ENCODE measurements at regions of chr2 and their contacts with region 1.

Region 1: GRCh38 chr2:101770726-101771125 is 73.2 kb downstream of the MAP4K4 start:
- DNase-seq: peak; percentile 21 to 76 (median 41)
- ATAC-seq: peak; percentile 93
- H3K4me3 ChIP-seq: no peak overlapping the region
- H3K27ac ChIP-seq: no peak overlapping the region
- H3K4me1 ChIP-seq: peaks cover 0 to 18% of the 10 kb centered on the region in 2 experiments; a peak in 2 of 5 replicates
- H3K27me3 ChIP-seq: no peaks in the 10 kb centered on the region
- CTCF ChIP-seq: peak; percentile 67 to 72 (median 68)
- EP300 ChIP-seq: no peak
- POLR2A ChIP-seq: no peak
- RAD21 ChIP-seq: peak; percentile 46 to 71

Region 2: DNA sequence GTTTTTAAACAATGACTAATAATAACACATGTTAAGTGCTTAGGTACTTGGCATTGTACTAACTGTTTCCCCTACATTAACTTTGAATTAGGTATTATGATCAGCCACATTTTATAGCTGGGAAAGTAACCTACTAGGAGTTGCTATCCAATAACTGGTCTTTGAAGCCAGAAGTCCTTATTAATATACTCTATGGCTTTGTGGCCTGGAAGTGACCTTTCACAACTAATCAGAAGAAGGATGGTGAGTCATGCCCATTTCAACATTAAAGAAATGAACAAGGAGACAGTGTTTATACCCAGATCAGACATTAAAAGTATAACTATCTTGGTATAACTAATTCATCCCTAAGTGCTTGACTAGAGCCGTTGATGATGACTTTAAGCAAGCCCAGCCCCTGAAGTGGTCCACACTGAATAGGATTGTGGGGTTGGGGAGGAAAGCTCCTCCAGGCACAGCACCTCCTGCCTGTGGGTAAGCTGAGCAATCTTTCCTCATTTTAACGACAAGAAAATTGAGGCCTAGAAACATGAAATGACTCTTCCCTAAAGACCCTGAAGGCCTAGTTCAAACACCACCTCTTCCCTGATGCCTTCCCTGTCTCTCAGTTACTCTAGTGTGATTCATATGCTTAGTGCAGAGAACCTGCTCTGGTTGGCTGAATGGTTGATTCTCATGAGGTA is 224.2 kb before region 1 on chr2:
- CTCF ChIA-PET with region 1: no interaction called
- POLR2A ChIA-PET with region 1: no interaction called
- in situ Hi-C with region 1: no loop called
- intact Hi-C with region 1: no loop called
- DNase-seq: no peak
- ATAC-seq: no peak
- H3K4me3 ChIP-seq: no peak overlapping the region
- H3K27ac ChIP-seq: no peak overlapping the region
- H3K4me1 ChIP-seq: no peaks in the 10 kb centered on the region
- H3K27me3 ChIP-seq: peaks cover 0 to 10% of the 10 kb centered on the region in 2 experiments; a peak in 3 of 5 replicates
- CTCF ChIP-seq: no peak
- EP300 ChIP-seq: no peak
- POLR2A ChIP-seq: no peak
- RAD21 ChIP-seq: no peak

Region 3: GRCh38 chr2:101725515-101726192 is 45.1 kb before region 1 on chr2:
- CTCF ChIA-PET with region 1: no interaction called
- POLR2A ChIA-PET with region 1: no interaction called
- in situ Hi-C with region 1: no loop called
- intact Hi-C with region 1: no loop called
- DNase-seq: peak; percentile 24 to 60 (median 27)
- ATAC-seq: peak; percentile 68
- H3K4me3 ChIP-seq: no peak overlapping the region
- H3K27ac ChIP-seq: no peak overlapping the region
- H3K4me1 ChIP-seq: peaks cover 0 to 4% of the 10 kb centered on the region in 2 experiments; a peak in 3 of 5 replicates
- H3K27me3 ChIP-seq: no peaks in the 10 kb centered on the region
- CTCF ChIP-seq: peak; percentile 43 to 65 (median 56)
- EP300 ChIP-seq: no peak
- POLR2A ChIP-seq: no peak
- RAD21 ChIP-seq: peak; percentile 40 to 62

Region 4: GRCh38 chr2:101823347-101823791 is 52.6 kb after region 1 on chr2:
- CTCF ChIA-PET with region 1: no interaction called
- POLR2A ChIA-PET with region 1: no interaction called
- in situ Hi-C with region 1: loop called (anchors 5 kb)
- intact Hi-C with region 1: no loop called
- DNase-seq: peak; percentile 47 to 82 (median 52)
- ATAC-seq: peak; percentile 92
- H3K4me3 ChIP-seq: no peak overlapping the region
- H3K27ac ChIP-seq: no peak overlapping the region
- H3K4me1 ChIP-seq: peaks cover 0 to 37% of the 10 kb centered on the region in 2 experiments; a peak in 3 of 5 replicates
- H3K27me3 ChIP-seq: no peaks in the 10 kb centered on the region
- CTCF ChIP-seq: peak; percentile 70 to 85 (median 83)
- EP300 ChIP-seq: no peak
- POLR2A ChIP-seq: no peak
- RAD21 ChIP-seq: peak; percentile 52 to 66

Region 5: GRCh38 chr2:101831351-101831865 is 60.7 kb after region 1 on chr2:
- CTCF ChIA-PET with region 1: interaction called, 3 read pairs
- POLR2A ChIA-PET with region 1: interaction called, 4 read pairs
- in situ Hi-C with region 1: no loop called
- intact Hi-C with region 1: loop called (anchors 2 kb)
- DNase-seq: peak; percentile 43 to 74 (median 54)
- ATAC-seq: peak; percentile 99
- H3K4me3 ChIP-seq: no peak overlapping the region
- H3K27ac ChIP-seq: no peak overlapping the region; the same call in 2 of the 3 replicates
- H3K4me1 ChIP-seq: peaks cover 0 to 31% of the 10 kb centered on the region in 2 experiments; a peak in 3 of 5 replicates
- H3K27me3 ChIP-seq: no peaks in the 10 kb centered on the region
- CTCF ChIP-seq: peak; percentile 76 to 81 (median 80)
- EP300 ChIP-seq: no peak
- POLR2A ChIP-seq: no peak
- RAD21 ChIP-seq: peak; percentile 66 to 72

Region 6: DNA sequence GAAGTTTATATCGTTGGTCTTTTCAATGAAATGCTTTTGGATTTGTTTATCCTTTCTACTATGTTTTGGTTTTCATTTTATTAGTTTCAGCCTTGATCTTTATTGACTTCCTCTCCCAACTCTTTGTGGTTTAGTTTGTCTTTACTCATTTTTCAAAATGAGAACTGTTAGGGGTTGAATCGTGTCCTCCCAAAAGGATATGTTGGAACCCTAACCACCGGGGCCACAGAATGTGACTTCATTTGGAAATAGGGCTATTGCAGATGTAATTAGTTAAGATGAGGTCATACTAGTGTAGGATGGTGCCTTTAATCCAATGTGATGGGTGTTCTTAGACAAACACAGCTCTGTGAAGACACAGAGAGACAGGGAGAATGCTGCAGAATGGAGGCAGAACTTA is 160.7 kb after region 1 on chr2:
- CTCF ChIA-PET with region 1: no interaction called
- POLR2A ChIA-PET with region 1: no interaction called
- in situ Hi-C with region 1: no loop called
- intact Hi-C with region 1: no loop called
- DNase-seq: no peak
- ATAC-seq: no peak
- H3K4me3 ChIP-seq: no peak overlapping the region
- H3K27ac ChIP-seq: no peak overlapping the region
- H3K4me1 ChIP-seq: no peaks in the 10 kb centered on the region; a peak in 1 of 5 replicates
- H3K27me3 ChIP-seq: peaks cover 0 to 6% of the 10 kb centered on the region in 2 experiments; a peak in 1 of 5 replicates
- CTCF ChIP-seq: no peak
- EP300 ChIP-seq: no peak
- POLR2A ChIP-seq: no peak
- RAD21 ChIP-seq: no peak